Aorta (tissue), 5 donors: ENCODE measurements at regions of chr1 and their contacts with region 1.

Region 1: GRCh38 chr1:117534995-117535467 is 70.8 kb upstream of the TENT5C start:
- DNase-seq: no peak
- ATAC-seq: peak; percentile 90
- H3K4me3 ChIP-seq: no peak overlapping the region
- H3K27ac ChIP-seq: no peak overlapping the region
- H3K4me1 ChIP-seq: peaks cover 0 to 3% of the 10 kb centered on the region in 2 donors
- H3K27me3 ChIP-seq: no peaks in the 10 kb centered on the region

Region 2: GRCh38 chr1:117499071-117499470 is 36.0 kb before region 1 on chr1:
- intact Hi-C with region 1: no loop called
- DNase-seq: no peak
- ATAC-seq: no peak
- H3K4me3 ChIP-seq: no peak overlapping the region
- H3K27ac ChIP-seq: no peak overlapping the region
- H3K4me1 ChIP-seq: no peaks in the 10 kb centered on the region
- H3K27me3 ChIP-seq: no peaks in the 10 kb centered on the region

Region 3: GRCh38 chr1:117605774-117606648 is 71.0 kb after region 1 on chr1 and contains the start of gene TENT5C:
- intact Hi-C with region 1: loop called in 1 of 2 experiments (anchors 5 kb)
- DNase-seq: peak; percentile 98 to 99
- ATAC-seq: peak; percentile 98
- H3K4me3 ChIP-seq: peak within 1 kb of the TSS; percentile 67 to 74
- H3K27ac ChIP-seq: peak within 1 kb of the TSS in 1 of 2 donors; percentile 83
- H3K4me1 ChIP-seq: no peaks in the 10 kb centered on the region
- H3K27me3 ChIP-seq: no peaks in the 10 kb centered on the region
- total RNA-seq, gene TENT5C: 6.8 to 17.7 TPM

Region 4: DNA sequence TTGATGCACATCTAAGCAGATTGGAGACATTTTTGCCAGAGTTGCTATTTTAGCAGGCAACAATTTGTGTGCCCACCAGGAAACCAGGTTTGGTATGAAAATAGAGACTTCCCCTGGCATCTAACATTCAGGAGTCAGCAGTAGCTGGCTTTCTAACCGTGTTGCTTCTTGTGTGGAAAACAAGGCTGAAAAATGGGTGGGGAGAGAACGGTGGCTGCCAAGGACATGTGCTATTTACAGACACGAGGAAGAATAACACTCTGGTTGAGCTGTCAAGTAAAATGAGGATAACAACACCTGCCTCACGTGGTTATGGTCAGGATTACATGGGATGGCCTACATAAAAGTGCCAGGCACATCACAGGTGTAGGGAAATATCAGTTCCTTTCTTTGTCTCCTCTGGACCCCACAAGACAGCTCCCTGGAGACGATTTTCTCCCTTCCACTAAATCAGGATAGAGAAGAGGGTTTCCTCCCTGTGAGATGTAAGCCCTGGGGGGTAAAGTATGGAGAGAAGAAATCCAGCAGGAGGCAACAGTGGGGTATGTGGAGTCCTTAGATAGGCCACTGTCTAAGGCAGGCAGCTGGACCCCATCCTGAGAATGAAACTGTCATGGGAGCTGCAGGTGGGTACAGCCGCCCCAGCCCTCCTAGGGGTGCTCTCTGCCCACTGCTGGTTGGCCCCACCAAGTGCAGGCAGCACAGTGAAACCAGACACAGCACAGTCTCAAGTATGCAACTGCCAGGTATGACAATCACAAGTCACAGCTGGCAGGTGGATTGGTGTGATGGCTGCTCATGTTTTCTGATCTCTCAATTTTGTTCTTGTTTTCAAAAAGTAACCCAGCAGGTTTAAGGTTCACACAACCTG is 151.1 kb after region 1 on chr1:
- intact Hi-C with region 1: loop called in 1 of 2 experiments (anchors 10 kb)
- DNase-seq: no peak
- ATAC-seq: no peak
- H3K4me3 ChIP-seq: no peak overlapping the region
- H3K27ac ChIP-seq: peak overlapping the region in 1 of 2 donors; percentile 32
- H3K4me1 ChIP-seq: no peaks in the 10 kb centered on the region
- H3K27me3 ChIP-seq: no peaks in the 10 kb centered on the region

Region 5: DNA sequence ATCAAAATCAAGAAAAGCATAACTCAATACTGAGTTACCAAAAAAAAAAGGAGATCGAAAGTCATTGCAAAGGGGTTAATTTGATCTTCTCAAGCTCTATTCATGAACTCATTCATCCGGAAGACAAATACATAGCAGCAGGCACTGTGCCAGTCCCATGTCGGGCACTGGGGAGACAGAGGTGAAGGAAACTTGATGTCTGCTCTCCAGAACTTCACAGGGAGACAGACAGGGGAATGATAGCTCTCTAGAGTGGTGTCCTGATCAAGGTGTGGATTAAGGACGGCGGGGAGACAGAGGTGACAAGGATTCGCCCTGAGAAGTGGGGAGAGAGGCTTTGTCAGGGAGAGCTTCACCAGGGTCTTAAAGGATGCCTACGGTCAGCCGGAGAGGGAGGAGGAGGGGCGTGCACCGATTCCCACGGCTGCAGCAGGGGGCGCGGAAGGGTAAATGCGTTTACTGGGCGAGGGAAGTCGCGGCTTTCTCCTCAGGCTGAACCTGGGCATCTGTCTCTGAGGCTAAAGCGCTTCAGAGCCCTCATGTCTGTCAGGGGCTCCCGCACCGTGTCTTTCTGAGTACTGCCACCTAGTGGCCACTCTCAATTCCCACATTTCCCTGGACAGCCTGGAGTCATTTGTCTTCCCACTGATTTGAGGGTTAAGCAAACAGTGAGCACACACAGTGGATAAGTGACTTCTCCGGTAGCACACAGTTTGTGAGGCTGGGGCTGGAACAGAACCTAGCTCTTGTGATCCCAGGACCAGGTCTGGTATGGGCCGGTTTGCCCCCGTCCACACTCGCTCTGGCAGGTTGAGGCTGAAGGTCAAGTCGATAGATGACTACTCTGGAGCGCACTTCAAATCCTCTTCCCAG is 223.6 kb after region 1 on chr1:
- intact Hi-C with region 1: loop called in 1 of 2 experiments (anchors 5 kb)
- DNase-seq: peak; percentile 75 to 83
- ATAC-seq: peak; percentile 92
- H3K4me3 ChIP-seq: peak overlapping the region in 1 of 2 donors; percentile 12
- H3K27ac ChIP-seq: no peak overlapping the region
- H3K4me1 ChIP-seq: peaks cover 0 to under 1% of the 10 kb centered on the region in 2 donors
- H3K27me3 ChIP-seq: no peaks in the 10 kb centered on the region

Region 6: GRCh38 chr1:117895482-117896114 is 360.6 kb after region 1 on chr1:
- intact Hi-C with region 1: loop called in 1 of 2 experiments (anchors 5 kb)
- DNase-seq: peak in 1 of 2 donors; percentile 59
- ATAC-seq: peak; percentile 84
- H3K4me3 ChIP-seq: no peak overlapping the region
- H3K27ac ChIP-seq: no peak overlapping the region
- H3K4me1 ChIP-seq: no peaks in the 10 kb centered on the region
- H3K27me3 ChIP-seq: no peaks in the 10 kb centered on the region